AG04450 (cell line): ENCODE measurements at regions of chr7 and their contacts with region 1.

Region 1: GRCh38 chr7:129611246-129612111 is at the start of gene NRF1:
- DNase-seq: peak; percentile 72
- H3K4me3 ChIP-seq: peak within 1 kb of the TSS; percentile 87
- H3K27ac ChIP-seq: peak within 1 kb of the TSS; percentile 91
- H3K27me3 ChIP-seq: no peaks in the 10 kb centered on the region
- CTCF ChIP-seq: no peak
- polyA plus RNA-seq, gene NRF1: 10.3 and 13.1 TPM in 2 replicates

Region 2: GRCh38 chr7:129417071-129417470 is 194.4 kb before region 1 on chr7:
- CTCF ChIA-PET with region 1: no interaction called
- POLR2A ChIA-PET with region 1: no interaction called
- DNase-seq: no peak
- H3K4me3 ChIP-seq: no peak overlapping the region
- H3K27ac ChIP-seq: no peak overlapping the region
- H3K27me3 ChIP-seq: no peaks in the 10 kb centered on the region
- CTCF ChIP-seq: no peak

Region 3: GRCh38 chr7:129635300-129636029 is 24.0 kb after region 1 on chr7:
- CTCF ChIA-PET with region 1: interaction called, 16 read pairs
- POLR2A ChIA-PET with region 1: interaction called, 3 read pairs
- DNase-seq: peak; percentile 54
- H3K4me3 ChIP-seq: no peak overlapping the region
- H3K27ac ChIP-seq: no peak overlapping the region
- H3K27me3 ChIP-seq: no peaks in the 10 kb centered on the region
- CTCF ChIP-seq: peak; percentile 97

Region 4: GRCh38 chr7:129644634-129645230 is 33.3 kb after region 1 on chr7:
- CTCF ChIA-PET with region 1: interaction called, 24 read pairs
- POLR2A ChIA-PET with region 1: no interaction called
- DNase-seq: peak; percentile 20
- H3K4me3 ChIP-seq: no peak overlapping the region
- H3K27ac ChIP-seq: no peak overlapping the region
- H3K27me3 ChIP-seq: no peaks in the 10 kb centered on the region
- CTCF ChIP-seq: peak; percentile 58